ENCODE measurements at regions of chr3 and their contacts with region 1.

Region 1: GRCh38 chr3:194424363-194424762 is 25.3 kb upstream of the GP5 start:
- DNase-seq: no peak
- H3K4me3 ChIP-seq: no peak overlapping the region
- H3K27ac ChIP-seq: no peak overlapping the region
- H3K4me1 ChIP-seq: no peaks in the 10 kb centered on the region
- H3K27me3 ChIP-seq: no peaks in the 10 kb centered on the region
- CTCF ChIP-seq: no peak; the same call in 1 of the 2 replicates

Region 2: DNA sequence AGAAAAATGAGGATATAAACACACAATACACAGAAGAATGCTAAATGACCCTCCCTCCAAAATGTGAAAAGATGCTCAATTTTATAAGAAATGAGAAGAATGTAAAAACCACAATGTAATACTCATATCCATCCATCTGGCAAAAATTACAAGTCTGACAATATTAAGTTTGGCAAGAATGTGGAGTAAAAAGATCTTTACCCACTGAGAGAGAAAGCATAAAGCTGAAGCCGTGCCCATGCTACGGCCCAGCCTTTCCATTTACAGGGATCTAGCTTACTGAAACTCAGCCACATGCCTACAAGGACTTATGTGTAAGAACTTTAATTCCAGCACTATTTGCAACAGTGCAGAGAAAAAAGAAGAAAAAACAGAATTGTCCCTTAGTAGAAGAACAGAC is 19.5 kb after region 1 on chr3:
- CTCF ChIA-PET with region 1: no interaction called
- POLR2A ChIA-PET with region 1: no interaction called
- intact Hi-C with region 1: loop called (anchors 2 kb)
- DNase-seq: no peak
- H3K4me3 ChIP-seq: no peak overlapping the region
- H3K27ac ChIP-seq: 0 out of 2 replicates have a peak overlapping the region, but pooled peaks have one; percentile 0
- H3K4me1 ChIP-seq: no peaks in the 10 kb centered on the region
- H3K27me3 ChIP-seq: no peaks in the 10 kb centered on the region
- CTCF ChIP-seq: no peak

Region 3: DNA sequence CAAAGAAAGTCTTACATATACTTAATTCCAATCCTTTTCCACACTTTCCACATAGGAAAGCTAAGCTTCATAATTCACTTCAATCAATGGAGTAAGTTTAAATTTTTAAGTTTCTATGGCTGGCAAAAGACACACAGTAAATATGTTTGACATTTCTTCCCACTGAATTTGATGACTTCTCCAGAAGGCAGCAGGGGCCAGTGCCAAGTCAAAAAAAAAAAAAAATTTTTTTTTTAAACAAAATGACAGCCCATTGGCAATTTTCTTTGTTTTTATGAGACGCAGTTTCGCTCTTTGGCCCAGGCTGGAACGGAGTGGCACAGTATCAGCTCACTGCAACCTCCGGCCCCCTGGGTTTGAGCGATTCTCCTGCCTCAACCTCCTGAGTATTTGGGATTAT is 33.8 kb after region 1 on chr3:
- CTCF ChIA-PET with region 1: no interaction called
- POLR2A ChIA-PET with region 1: no interaction called
- intact Hi-C with region 1: loop called (anchors 5 kb)
- DNase-seq: no peak
- H3K4me3 ChIP-seq: no peak overlapping the region
- H3K27ac ChIP-seq: no peak overlapping the region
- H3K4me1 ChIP-seq: no peaks in the 10 kb centered on the region; the same call in 1 of the 2 replicates
- H3K27me3 ChIP-seq: no peaks in the 10 kb centered on the region
- CTCF ChIP-seq: no peak